ENCODE measurements at regions of chr14 and their contacts with region 1.

Region 1: DNA sequence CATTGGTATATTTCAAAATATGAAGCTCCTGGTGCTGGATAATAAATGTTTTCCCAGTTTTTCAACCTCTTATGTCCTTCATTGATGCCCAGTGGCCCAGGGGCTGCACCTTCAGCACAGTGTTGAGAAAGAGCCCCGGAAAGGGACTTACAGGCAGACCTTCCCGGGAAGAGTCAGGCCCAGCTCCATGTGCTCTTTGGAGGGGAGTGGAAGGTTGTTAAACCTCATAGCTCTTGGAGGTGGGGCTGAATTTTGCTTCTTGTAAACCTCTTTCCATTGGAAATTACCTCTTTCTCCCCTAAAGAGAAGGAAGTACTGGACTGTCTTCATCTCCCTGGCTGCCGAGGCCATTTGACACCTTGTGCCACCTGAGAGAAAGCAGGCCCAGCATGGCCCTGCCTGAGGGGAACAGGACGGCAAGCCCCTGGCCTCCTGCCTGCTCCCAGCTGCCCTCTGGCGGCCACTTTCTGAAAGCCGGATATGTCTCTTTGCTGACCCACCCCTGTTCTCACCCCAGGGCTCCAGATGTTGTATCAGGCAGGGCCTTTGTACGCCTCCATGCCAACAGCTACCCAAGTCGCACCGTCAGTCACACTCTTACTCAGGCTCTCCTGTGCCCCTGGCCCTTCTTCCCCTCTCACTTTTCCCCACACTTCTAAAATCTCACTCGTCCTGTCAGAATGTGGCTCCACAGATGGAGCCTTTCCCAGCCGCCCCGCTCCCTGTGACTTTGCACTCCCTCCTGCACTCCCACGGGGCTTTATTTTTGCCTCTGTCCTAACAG is 43.0 kb downstream of the EVL start:
- DNase-seq: peak; percentile 69 to 91 (median 81)
- H3K4me3 ChIP-seq: no peak overlapping the region
- H3K27ac ChIP-seq: peak overlapping the region in 1 of 5 donors; percentile 1
- H3K4me1 ChIP-seq: peaks cover 13 to 30% of the 10 kb centered on the region in 2 donors
- H3K27me3 ChIP-seq: no peaks in the 10 kb centered on the region
- CTCF ChIP-seq: peak; percentile 81 to 92 (median 88)
- POLR2A ChIP-seq: no peak

Region 2: DNA sequence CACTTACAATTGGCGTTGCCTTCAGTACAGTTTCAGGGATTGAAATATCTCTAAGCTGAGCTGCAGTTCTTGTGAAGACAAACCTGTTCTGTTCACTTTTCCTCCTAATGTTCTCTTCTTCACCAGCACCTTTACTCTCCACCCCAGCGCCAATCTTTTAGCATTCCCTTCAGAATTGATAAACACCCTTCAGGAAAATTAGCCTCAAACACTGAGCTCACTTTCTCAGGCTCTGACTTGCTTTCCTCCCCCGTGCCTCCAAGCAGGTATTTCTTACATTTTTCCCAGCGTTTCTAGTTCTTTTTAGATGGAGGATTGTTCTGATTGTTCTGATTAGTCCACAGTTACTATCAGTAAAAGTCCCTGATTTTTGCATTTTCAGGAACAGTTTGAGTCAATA is 131.6 kb before region 1 on chr14:
- intact Hi-C with region 1: loop called (anchors 5 kb)
- DNase-seq: no peak
- H3K4me3 ChIP-seq: no peak overlapping the region
- H3K27ac ChIP-seq: no peak overlapping the region
- H3K4me1 ChIP-seq: peaks cover 9 to 10% of the 10 kb centered on the region in 2 donors
- H3K27me3 ChIP-seq: no peaks in the 10 kb centered on the region
- CTCF ChIP-seq: no peak
- POLR2A ChIP-seq: no peak

Region 3: DNA sequence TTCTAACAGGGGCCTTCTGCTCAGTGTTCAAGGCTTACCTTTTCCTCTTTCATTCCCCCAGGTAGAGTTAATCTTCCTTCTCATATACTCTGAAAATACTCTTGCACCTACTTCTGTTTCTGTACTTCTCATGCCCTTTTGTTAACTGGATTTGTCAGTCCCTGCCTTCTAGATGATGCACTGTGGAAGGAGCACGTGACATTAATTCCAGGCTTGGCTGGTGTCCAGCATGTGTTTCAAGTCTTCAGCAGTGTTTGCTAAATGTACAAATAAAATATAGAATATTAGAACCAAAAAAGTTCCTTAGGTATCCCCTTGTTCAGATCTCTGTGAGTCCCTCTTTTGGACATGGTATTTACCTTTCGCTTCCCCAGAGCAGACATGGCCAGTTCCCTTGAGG is 70.9 kb before region 1 on chr14:
- intact Hi-C with region 1: no loop called
- DNase-seq: peak in 4 of 7 donors; percentile 33 to 73 (median 42)
- H3K4me3 ChIP-seq: no peak overlapping the region
- H3K27ac ChIP-seq: no peak overlapping the region
- H3K4me1 ChIP-seq: peaks cover 0 to 9% of the 10 kb centered on the region in 2 donors
- H3K27me3 ChIP-seq: no peaks in the 10 kb centered on the region
- CTCF ChIP-seq: no peak
- POLR2A ChIP-seq: no peak

Measured in adrenal gland (tissue), 19 donors.